Dorsolateral prefrontal cortex (tissue), 120 donors: ENCODE measurements at regions of chr6 and their contacts with region 1.

Region 1: DNA sequence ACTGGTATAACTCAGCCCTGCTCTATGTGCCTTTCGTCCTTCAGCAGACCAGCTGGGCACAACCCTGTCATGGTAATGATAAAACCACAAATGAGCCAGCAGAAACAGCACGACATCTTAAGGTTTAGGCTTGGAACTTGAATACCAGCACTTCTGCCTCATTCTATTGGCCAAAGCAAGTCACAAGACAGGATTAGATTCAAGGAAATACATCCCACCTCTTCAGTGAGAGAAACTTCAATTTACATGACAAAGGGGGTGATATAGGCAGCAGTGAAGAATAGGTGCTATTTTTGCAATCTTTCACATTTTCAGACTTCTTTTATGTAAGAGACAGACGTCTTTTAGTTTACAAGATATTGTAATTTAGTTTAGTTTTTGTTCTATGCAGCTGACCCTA is 69.8 kb upstream of the SLC35F1 start:
- DNase-seq: no peak
- H3K4me3 ChIP-seq: no peak overlapping the region
- H3K27ac ChIP-seq: peak overlapping the region in 1 of 59 donors; percentile 10
- H3K27me3 ChIP-seq: peaks cover 0 to 6% (median 0%) of the 10 kb centered on the region in 45 donors
- CTCF ChIP-seq: no peak

Region 2: DNA sequence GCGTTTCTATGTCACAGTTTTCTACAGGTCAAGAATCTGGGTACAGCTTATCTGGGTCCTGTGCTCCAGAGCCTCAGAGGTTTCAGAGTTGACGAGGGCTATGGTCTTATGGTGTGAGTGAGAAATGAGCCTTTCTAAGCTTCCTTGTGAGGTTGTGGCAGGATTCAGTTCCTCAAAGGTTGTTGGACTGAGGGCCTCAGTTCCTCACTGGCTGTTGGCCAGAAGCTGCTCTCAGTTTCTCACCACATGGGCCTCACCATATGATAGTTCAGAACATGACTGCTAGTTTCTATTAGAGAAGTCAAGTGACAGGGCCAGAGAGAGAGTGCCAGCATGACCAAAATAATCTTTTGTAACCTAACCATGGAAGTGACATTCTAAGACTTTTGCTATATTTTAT is 65.9 kb before region 1 on chr6:
- intact Hi-C with region 1: no loop called
- DNase-seq: no peak
- H3K4me3 ChIP-seq: no peak overlapping the region
- H3K27ac ChIP-seq: no peak overlapping the region
- H3K27me3 ChIP-seq: no peaks in the 10 kb centered on the region
- CTCF ChIP-seq: no peak

Region 3: GRCh38 chr6:118269659-118270058 is 432.4 kb after region 1 on chr6:
- intact Hi-C with region 1: loop called in 1 of 2 experiments (anchors 5 kb)
- DNase-seq: no peak
- H3K4me3 ChIP-seq: no peak overlapping the region
- H3K27ac ChIP-seq: no peak overlapping the region
- H3K27me3 ChIP-seq: no peaks in the 10 kb centered on the region
- CTCF ChIP-seq: no peak